ENCODE measurements at regions of chr6 and their contacts with region 1.

Region 1: GRCh38 chr6:135586841-135587240 is 89.3 kb upstream of the AHI1 start:
- DNase-seq: peak in 2 of 9 donors; percentile 6 to 13
- ATAC-seq: peak; percentile 32
- H3K4me3 ChIP-seq: no peak overlapping the region
- H3K4me3 Mint-ChIP-seq: peak overlapping the region in 1 of 10 donors; percentile 50
- H3K27ac ChIP-seq: no peak overlapping the region
- H3K27ac Mint-ChIP-seq: peak overlapping the region in 1 of 9 donors; percentile 91
- H3K4me1 ChIP-seq: no peaks in the 10 kb centered on the region
- H3K4me1 Mint-ChIP-seq: peaks cover 1 to 62% (median 13%) of the 10 kb centered on the region in 7 donors
- H3K27me3 ChIP-seq: no peaks in the 10 kb centered on the region
- H3K27me3 Mint-ChIP-seq: no peaks in the 10 kb centered on the region

Region 2: GRCh38 chr6:135568366-135568765 is 18.5 kb before region 1 on chr6:
- CTCF ChIA-PET with region 1: no interaction called
- POLR2A ChIA-PET with region 1: no interaction called
- intact Hi-C with region 1: loop called in 1 of 2 experiments (anchors 1 kb)
- DNase-seq: peak in 8 of 9 donors; percentile 27 to 63 (median 44)
- ATAC-seq: peak; percentile 85
- H3K4me3 ChIP-seq: no peak overlapping the region
- H3K4me3 Mint-ChIP-seq: peak overlapping the region in 3 of 10 donors; percentile 5 to 57 (median 13)
- H3K27ac ChIP-seq: no peak overlapping the region
- H3K27ac Mint-ChIP-seq: peak overlapping the region in 4 of 9 donors; percentile 16 to 90 (median 18)
- H3K4me1 ChIP-seq: peaks cover 0 to 9% of the 10 kb centered on the region in 2 donors
- H3K4me1 Mint-ChIP-seq: peaks cover 0 to 77% (median 7%) of the 10 kb centered on the region in 7 donors
- H3K27me3 ChIP-seq: no peaks in the 10 kb centered on the region
- H3K27me3 Mint-ChIP-seq: no peaks in the 10 kb centered on the region

Region 3: DNA sequence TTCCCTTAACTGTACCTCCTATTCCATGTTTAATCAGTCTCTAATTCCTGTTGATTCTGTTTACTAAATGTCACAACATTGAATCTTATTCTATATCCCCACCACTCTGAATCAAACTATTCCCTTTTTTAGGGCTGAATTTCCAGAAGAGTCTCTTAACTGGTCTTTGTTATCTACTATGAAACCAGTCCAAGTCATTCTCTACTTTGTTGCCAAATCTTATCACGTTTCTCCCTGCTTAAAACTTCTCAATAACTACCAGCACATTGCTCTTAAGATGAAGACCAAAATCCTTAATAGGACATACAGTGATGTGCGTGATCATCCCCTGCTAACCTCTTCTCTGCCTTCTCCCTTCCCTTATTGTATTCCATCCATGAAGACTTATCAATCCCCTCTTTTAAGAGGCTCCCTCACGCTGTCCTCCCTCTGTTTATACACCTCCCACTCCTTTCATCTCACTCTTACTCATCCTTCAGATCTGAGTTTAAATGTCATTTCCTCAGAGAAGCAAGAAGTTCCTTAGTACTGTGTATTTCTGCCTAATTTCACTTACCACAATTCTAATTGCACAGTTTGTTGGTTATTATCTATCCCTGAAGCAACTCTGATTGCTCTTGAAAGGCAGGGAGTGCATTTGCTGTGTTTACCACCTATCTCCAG is 53.7 kb after region 1 on chr6:
- CTCF ChIA-PET with region 1: no interaction called
- POLR2A ChIA-PET with region 1: no interaction called
- intact Hi-C with region 1: loop called in 1 of 2 experiments (anchors 5 kb)
- DNase-seq: no peak
- ATAC-seq: no peak
- H3K4me3 ChIP-seq: no peak overlapping the region
- H3K4me3 Mint-ChIP-seq: peak overlapping the region in 1 of 10 donors; percentile 50
- H3K27ac ChIP-seq: no peak overlapping the region
- H3K27ac Mint-ChIP-seq: peak overlapping the region in 2 of 9 donors; percentile 4 to 77
- H3K4me1 ChIP-seq: no peaks in the 10 kb centered on the region
- H3K4me1 Mint-ChIP-seq: peaks cover 0 to 52% (median 10%) of the 10 kb centered on the region in 7 donors
- H3K27me3 ChIP-seq: no peaks in the 10 kb centered on the region
- H3K27me3 Mint-ChIP-seq: no peaks in the 10 kb centered on the region

Region 4: DNA sequence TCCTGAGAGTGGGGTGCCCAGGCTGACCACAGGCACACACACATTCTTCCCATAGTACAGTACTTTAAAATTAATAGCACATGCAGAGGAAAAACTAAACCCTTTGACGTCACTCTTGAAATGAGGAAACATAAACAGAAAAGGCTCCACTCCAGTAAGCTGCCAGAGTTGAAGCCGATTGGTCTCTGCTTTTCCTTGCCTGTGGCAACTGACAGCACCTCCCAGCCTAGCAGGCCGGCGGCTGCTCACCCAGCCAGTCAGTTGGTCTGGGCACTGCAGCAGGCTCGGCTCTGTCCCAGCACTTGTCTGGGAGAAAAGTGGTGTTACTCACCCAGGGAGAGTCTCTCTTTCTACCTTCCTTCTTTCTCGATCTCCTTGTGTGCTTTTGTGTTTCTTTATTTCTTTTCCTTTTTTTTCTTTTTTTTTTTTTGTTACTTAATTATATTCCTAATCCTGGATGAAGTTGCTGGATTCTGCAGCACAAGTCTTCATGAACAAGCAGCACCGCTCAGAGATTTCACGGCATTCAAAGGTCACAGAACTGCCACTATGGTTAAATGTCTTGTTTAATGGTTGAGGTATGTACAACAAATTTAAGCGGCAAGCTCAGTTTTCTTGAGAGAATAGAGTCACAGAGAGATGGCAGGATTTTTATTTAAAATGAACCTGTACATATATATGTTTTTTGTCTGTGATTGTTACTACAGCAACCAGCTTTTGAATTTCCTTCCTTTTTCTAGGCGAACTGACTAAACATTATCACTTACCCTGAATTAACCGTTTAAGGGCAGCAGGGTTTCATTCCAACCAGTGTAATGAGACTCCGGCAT is 264.8 kb after region 1 on chr6 and contains the start of gene PDE7B:
- CTCF ChIA-PET with region 1: no interaction called
- POLR2A ChIA-PET with region 1: no interaction called
- intact Hi-C with region 1: no loop called
- DNase-seq: peak; percentile 18 to 73 (median 46)
- ATAC-seq: peak; percentile 94
- H3K4me3 ChIP-seq: peak within 1 kb of the TSS; percentile 53
- H3K4me3 Mint-ChIP-seq: peak within 1 kb of the TSS in 9 of 10 donors; percentile 71 to 90 (median 87)
- H3K27ac ChIP-seq: peak within 1 kb of the TSS; percentile 75
- H3K27ac Mint-ChIP-seq: peak within 1 kb of the TSS in 6 of 9 donors; percentile 78 to 96 (median 88)
- H3K4me1 ChIP-seq: peaks cover 0 to 23% of the 10 kb centered on the region in 2 donors
- H3K4me1 Mint-ChIP-seq: peaks cover 5 to 47% (median 36%) of the 10 kb centered on the region in 7 donors
- H3K27me3 ChIP-seq: no peaks in the 10 kb centered on the region
- H3K27me3 Mint-ChIP-seq: no peaks in the 10 kb centered on the region
- total RNA-seq, gene PDE7B: 0.37 to 18.7 (median 1.7) TPM